Caco-2 (cell line): ENCODE measurements at regions of chr21 and their contacts with region 1.

Region 1: GRCh38 chr21:17554679-17555465 is 42.0 kb downstream of the CXADR start:
- DNase-seq: peak in 1 of 2 experiments; percentile 26
- H3K4me3 ChIP-seq: no peak overlapping the region
- H3K4me3 Mint-ChIP-seq: no peak overlapping the region
- H3K27ac Mint-ChIP-seq: peak overlapping the region; percentile 65
- H3K4me1 ChIP-seq: peaks cover 11% of the 10 kb centered on the region
- H3K4me1 Mint-ChIP-seq: peaks cover 38% of the 10 kb centered on the region
- H3K27me3 ChIP-seq: no peaks in the 10 kb centered on the region
- H3K27me3 Mint-ChIP-seq: no peaks in the 10 kb centered on the region
- CTCF ChIP-seq: peak; percentile 18 to 49

Region 2: GRCh38 chr21:17387030-17387617 is 167.7 kb before region 1 on chr21:
- CTCF ChIA-PET with region 1: interaction called, 36 read pairs
- POLR2A ChIA-PET with region 1: no interaction called
- intact Hi-C with region 1: loop called (anchors 1 kb)
- DNase-seq: peak in 1 of 2 experiments; percentile 72
- H3K4me3 ChIP-seq: no peak overlapping the region
- H3K4me3 Mint-ChIP-seq: no peak overlapping the region
- H3K27ac Mint-ChIP-seq: no peak overlapping the region
- H3K4me1 ChIP-seq: no peaks in the 10 kb centered on the region; the same call in 1 of the 2 replicates
- H3K4me1 Mint-ChIP-seq: peaks cover 5% of the 10 kb centered on the region
- H3K27me3 ChIP-seq: no peaks in the 10 kb centered on the region
- H3K27me3 Mint-ChIP-seq: no peaks in the 10 kb centered on the region
- CTCF ChIP-seq: peak; percentile 40 to 82

Region 3: GRCh38 chr21:17501107-17502006 is 53.5 kb before region 1 on chr21:
- CTCF ChIA-PET with region 1: no interaction called
- POLR2A ChIA-PET with region 1: no interaction called
- intact Hi-C with region 1: no loop called
- DNase-seq: peak; percentile 80 to 84
- H3K4me3 ChIP-seq: no peak overlapping the region
- H3K4me3 Mint-ChIP-seq: peak overlapping the region; percentile 19
- H3K27ac Mint-ChIP-seq: peak overlapping the region; percentile 76
- H3K4me1 ChIP-seq: peaks cover 43% of the 10 kb centered on the region
- H3K4me1 Mint-ChIP-seq: peaks cover 42% of the 10 kb centered on the region
- H3K27me3 ChIP-seq: no peaks in the 10 kb centered on the region
- H3K27me3 Mint-ChIP-seq: no peaks in the 10 kb centered on the region
- CTCF ChIP-seq: no peak

Region 4: DNA sequence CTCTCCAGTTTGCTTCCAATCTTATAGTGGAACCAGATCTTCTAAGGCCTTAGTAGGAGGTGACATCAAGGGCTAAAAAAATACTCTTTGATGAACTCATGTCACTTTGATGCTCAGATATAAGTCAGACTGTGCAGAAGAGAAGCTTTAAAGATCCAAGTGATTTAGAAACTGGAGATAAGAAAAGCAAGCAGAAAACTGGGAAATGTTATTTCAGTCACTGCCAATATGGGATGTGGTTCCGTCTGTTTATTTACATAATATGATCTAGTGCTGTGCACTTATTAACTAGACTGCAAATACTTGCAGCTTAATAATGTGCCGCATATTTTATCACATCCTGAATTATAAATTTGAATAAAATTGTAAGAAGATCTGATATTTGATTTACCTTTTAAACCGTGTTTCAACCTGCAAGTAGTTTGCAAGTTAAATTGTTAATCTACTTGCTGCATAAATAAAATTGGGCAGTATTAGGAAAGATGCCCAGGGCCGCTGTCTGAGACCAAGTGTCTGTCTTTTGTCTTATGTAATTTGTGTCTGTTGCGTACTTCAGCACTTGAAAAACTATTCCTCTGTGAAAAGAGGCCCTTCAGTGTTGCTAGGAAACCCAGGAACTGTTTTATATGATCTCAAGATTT is 12.4 kb before region 1 on chr21:
- CTCF ChIA-PET with region 1: interaction called, 4 read pairs
- POLR2A ChIA-PET with region 1: no interaction called
- intact Hi-C with region 1: loop called (anchors 1 kb)
- DNase-seq: peak in 1 of 2 experiments; percentile 57
- H3K4me3 ChIP-seq: no peak overlapping the region
- H3K4me3 Mint-ChIP-seq: peak overlapping the region; percentile 54
- H3K27ac Mint-ChIP-seq: no peak overlapping the region
- H3K4me1 ChIP-seq: peaks cover 54% of the 10 kb centered on the region
- H3K4me1 Mint-ChIP-seq: peaks cover 71% of the 10 kb centered on the region
- H3K27me3 ChIP-seq: no peaks in the 10 kb centered on the region
- H3K27me3 Mint-ChIP-seq: no peaks in the 10 kb centered on the region
- CTCF ChIP-seq: no peak

Region 5: GRCh38 chr21:17858747-17859146 is 303.9 kb after region 1 on chr21:
- CTCF ChIA-PET with region 1: no interaction called
- POLR2A ChIA-PET with region 1: no interaction called
- intact Hi-C with region 1: no loop called
- DNase-seq: no peak
- H3K4me3 ChIP-seq: no peak overlapping the region
- H3K4me3 Mint-ChIP-seq: no peak overlapping the region
- H3K27ac Mint-ChIP-seq: no peak overlapping the region
- H3K4me1 ChIP-seq: no peaks in the 10 kb centered on the region
- H3K4me1 Mint-ChIP-seq: no peaks in the 10 kb centered on the region
- H3K27me3 ChIP-seq: no peaks in the 10 kb centered on the region
- H3K27me3 Mint-ChIP-seq: peaks cover 11% of the 10 kb centered on the region
- CTCF ChIP-seq: no peak

Region 6: GRCh38 chr21:17889171-17889570 is 334.3 kb after region 1 on chr21:
- CTCF ChIA-PET with region 1: no interaction called
- POLR2A ChIA-PET with region 1: no interaction called
- intact Hi-C with region 1: no loop called
- DNase-seq: no peak
- H3K4me3 ChIP-seq: no peak overlapping the region
- H3K4me3 Mint-ChIP-seq: no peak overlapping the region
- H3K27ac Mint-ChIP-seq: no peak overlapping the region
- H3K4me1 ChIP-seq: no peaks in the 10 kb centered on the region
- H3K4me1 Mint-ChIP-seq: no peaks in the 10 kb centered on the region
- H3K27me3 ChIP-seq: no peaks in the 10 kb centered on the region
- H3K27me3 Mint-ChIP-seq: peaks cover 12% of the 10 kb centered on the region
- CTCF ChIP-seq: no peak